BJ (cell line): ENCODE measurements at regions of chr15 and their contacts with region 1.

Region 1: DNA sequence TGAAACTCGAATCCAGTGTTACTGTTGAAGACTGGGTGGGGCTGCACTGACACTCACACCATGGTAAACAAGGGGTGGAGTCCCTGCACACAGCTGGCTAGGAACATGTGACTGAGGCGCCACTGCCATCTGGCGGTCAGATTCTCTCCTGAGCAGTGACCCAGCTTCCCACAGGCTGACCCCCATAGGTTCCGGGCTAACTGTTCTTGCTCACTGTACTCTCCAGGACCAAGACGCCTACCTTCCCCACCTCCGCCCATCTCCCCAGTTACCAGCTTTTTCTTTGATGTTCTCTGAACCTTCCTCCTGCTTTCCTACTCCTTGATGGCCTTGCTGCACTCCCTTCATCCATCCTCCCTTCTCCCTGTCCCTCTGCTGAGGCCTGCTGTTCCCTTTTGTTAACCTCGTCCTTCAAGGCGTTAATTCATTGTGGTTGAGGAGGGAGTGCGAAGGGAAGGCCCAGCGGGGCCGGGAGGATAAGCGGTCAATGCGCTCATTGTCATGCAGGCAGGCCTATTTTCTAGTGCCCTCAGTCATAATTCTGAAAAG is 115.2 kb downstream of the ATP8B4 start:
- DNase-seq: peak; percentile 23
- H3K4me3 ChIP-seq: no peak overlapping the region
- H3K27me3 ChIP-seq: no peaks in the 10 kb centered on the region
- CTCF ChIP-seq: peak; percentile 87

Region 2: GRCh38 chr15:48975472-48976419 is 1028.1 kb before region 1 on chr15:
- CTCF ChIA-PET with region 1: no interaction called
- POLR2A ChIA-PET with region 1: no interaction called
- DNase-seq: no peak
- H3K4me3 ChIP-seq: peak overlapping the region; percentile 36
- H3K27me3 ChIP-seq: no peaks in the 10 kb centered on the region; the same call in 1 of the 2 replicates
- CTCF ChIP-seq: peak; percentile 65

Region 3: GRCh38 chr15:49235446-49236124 is 768.3 kb before region 1 on chr15:
- CTCF ChIA-PET with region 1: interaction called, 33 read pairs
- POLR2A ChIA-PET with region 1: no interaction called
- DNase-seq: peak; percentile 59
- H3K4me3 ChIP-seq: no peak overlapping the region
- H3K27me3 ChIP-seq: no peaks in the 10 kb centered on the region
- CTCF ChIP-seq: peak; percentile 70

Region 4: DNA sequence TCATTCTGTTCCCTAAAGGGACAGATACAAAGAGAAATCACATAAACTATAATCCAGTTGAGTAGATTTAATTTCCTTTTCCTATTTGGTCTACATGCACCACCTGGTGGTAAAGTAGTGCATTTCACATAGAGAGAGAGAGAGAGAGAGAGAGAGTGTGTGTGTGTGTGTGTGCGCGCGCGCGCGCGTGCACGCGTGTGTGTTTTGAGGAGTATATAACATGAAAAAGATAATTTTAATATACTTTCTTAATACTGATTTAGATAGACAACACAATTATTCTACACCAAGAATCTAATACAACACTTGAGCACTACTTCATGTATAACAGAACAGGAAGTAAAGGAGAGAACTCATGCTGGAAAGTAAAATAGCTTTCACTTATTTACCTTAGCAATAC is 581.9 kb before region 1 on chr15:
- CTCF ChIA-PET with region 1: interaction called, 10 read pairs
- POLR2A ChIA-PET with region 1: no interaction called
- DNase-seq: no peak
- H3K4me3 ChIP-seq: no peak overlapping the region
- H3K27me3 ChIP-seq: no peaks in the 10 kb centered on the region
- CTCF ChIP-seq: peak; percentile 59

Region 5: DNA sequence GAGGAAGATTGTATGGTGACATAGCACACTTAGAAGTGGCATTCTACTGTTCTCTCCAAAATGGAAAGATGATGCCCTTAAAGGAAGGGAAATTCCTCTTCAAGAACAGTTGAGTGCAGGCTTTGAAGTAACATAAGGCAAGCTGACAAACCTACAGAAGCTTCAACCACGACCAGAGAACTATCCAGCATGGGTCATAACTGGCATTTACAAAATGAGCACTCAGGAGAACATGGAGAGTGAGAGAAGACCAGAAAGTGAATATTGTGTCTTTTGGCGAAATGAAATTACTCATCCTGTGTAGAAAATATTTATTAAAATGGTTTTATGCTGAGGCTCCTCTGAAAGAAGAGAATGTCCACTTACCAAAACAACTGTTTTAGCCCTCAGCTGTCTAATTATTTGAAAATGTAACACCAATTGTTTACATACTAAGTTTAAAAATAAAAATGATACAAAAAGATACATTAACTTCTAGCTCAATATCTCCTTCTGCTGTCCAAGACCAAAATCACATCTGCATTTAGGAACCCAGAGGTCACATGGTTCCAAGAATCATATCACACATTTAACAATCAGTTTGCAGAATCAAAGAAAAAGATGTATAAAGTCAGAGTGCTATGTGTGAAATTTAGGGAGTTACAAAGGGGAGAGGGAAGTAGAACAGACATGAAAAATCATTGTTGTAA is 101.7 kb before region 1 on chr15:
- CTCF ChIA-PET with region 1: interaction called, 15 read pairs
- POLR2A ChIA-PET with region 1: interaction called, 7 read pairs
- DNase-seq: no peak
- H3K4me3 ChIP-seq: no peak overlapping the region
- H3K27me3 ChIP-seq: no peaks in the 10 kb centered on the region
- CTCF ChIP-seq: peak; percentile 43

Region 6: DNA sequence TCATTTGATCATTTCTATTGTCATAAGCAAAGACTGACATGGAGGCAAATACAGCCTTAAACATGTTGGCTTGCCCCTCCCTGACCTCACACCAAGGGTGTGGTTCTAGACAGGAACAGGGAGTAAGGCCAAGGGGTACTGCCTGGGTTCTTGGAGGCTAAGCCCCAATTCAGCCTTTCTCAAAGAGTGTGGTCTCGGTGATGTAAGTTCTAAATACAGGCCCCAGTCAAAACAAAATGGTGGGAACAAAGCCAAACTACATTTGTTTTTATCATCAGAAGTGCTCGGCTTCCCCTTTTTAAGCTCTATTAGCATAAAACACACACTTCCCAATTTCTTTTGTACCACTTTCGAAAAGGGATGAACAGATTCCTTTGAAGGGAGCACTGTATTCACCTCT is 14.4 kb before region 1 on chr15:
- CTCF ChIA-PET with region 1: interaction called, 13 read pairs
- POLR2A ChIA-PET with region 1: no interaction called
- DNase-seq: no peak
- H3K4me3 ChIP-seq: no peak overlapping the region
- H3K27me3 ChIP-seq: no peaks in the 10 kb centered on the region
- CTCF ChIP-seq: no peak

Region 7: DNA sequence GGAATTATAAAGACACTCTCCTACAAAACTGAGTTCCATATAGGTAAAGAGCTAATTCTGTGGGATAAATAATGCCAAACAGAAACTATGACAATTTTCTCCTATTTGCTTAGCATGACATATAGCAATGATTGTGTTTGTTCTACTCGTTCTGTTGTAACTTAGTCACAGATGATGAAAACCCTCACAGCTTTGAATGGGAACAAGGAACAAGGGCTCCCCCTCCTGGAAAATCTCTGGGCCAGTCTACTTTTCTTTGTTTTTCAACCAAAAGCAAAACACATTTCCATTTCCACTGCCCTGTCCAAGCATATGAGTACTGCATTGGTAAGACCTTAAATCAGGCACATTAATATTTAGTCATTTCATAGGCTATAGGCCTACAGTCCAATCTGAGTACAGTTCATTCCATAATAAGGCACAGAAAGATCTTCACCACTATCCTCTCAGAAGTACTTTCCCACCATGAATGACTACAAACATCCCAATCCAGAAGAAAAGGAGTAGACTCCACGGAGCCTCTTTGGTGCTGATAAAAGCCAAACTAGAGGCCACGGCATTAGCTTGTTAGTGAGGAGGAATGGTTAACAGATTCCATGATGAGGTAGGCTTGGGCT is 48.1 kb after region 1 on chr15:
- CTCF ChIA-PET with region 1: interaction called, 13 read pairs
- POLR2A ChIA-PET with region 1: no interaction called
- DNase-seq: peak; percentile 28
- H3K4me3 ChIP-seq: no peak overlapping the region
- H3K27me3 ChIP-seq: no peaks in the 10 kb centered on the region
- CTCF ChIP-seq: peak; percentile 78